ENCODE measurements at regions of chr1 and their contacts with region 1.

Region 1: DNA sequence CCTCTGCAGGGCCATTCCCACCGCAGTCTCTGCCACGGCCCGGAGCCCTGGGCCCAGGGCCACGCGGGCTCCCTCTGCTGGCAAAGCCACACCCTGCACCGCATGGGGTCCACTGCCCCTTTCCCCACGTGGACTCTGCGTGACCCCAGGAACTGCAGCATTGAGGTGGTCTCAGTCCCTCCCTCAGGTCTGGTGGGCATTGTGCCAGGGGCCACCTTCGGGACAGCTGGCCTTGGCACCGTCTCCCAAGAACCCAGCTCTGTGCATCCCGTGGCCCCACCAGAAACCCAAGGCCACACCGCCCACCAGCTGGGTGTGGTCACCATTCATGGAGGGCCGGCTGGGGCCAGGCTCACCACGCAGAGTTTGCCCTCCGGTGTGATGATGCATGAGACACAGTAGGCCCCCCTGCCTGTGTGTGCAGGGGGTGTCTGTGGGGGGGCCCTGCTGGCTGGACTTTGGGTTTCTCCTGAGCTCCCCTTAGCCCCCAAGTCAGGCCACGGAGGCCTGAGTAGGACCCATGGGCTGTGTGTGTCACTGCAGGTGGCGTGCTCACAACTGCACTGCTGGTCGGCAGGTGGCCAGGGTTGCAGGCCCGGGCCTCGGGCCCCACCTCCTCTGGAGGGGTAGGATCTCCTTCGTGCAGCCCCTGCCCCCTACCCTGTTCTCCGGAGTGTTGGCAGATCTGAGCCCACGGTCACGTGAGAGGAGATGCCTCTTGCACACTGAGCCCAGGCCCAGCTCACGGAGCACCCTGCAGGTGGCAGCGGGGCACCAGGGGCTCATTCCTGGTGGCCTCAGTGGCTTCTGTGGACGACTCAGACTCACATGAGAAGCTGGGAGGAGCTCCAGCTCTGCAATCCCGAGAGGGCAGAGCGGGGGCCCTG is 5.8 kb downstream of the VWA1 start:
- DNase-seq: peak in 2 of 3 donors; percentile 52 to 57
- H3K4me3 ChIP-seq: no peak overlapping the region
- H3K27ac ChIP-seq: no peak overlapping the region
- H3K4me1 ChIP-seq: peaks cover 0 to 36% (median 23%) of the 10 kb centered on the region in 4 experiments
- H3K27me3 ChIP-seq: peaks cover 0 to 3% (median 0%) of the 10 kb centered on the region in 5 experiments

Region 2: GRCh38 chr1:1361982-1362423 is 79.2 kb before region 1 on chr1:
- CTCF ChIA-PET with region 1: no interaction called
- POLR2A ChIA-PET with region 1: no interaction called
- DNase-seq: no peak
- H3K4me3 ChIP-seq: no peak overlapping the region
- H3K27ac ChIP-seq: no peak overlapping the region
- H3K4me1 ChIP-seq: peaks cover 0 to 5% (median 2%) of the 10 kb centered on the region in 4 experiments
- H3K27me3 ChIP-seq: peaks cover 0 to 66% (median 20%) of the 10 kb centered on the region in 5 experiments

Region 3: DNA sequence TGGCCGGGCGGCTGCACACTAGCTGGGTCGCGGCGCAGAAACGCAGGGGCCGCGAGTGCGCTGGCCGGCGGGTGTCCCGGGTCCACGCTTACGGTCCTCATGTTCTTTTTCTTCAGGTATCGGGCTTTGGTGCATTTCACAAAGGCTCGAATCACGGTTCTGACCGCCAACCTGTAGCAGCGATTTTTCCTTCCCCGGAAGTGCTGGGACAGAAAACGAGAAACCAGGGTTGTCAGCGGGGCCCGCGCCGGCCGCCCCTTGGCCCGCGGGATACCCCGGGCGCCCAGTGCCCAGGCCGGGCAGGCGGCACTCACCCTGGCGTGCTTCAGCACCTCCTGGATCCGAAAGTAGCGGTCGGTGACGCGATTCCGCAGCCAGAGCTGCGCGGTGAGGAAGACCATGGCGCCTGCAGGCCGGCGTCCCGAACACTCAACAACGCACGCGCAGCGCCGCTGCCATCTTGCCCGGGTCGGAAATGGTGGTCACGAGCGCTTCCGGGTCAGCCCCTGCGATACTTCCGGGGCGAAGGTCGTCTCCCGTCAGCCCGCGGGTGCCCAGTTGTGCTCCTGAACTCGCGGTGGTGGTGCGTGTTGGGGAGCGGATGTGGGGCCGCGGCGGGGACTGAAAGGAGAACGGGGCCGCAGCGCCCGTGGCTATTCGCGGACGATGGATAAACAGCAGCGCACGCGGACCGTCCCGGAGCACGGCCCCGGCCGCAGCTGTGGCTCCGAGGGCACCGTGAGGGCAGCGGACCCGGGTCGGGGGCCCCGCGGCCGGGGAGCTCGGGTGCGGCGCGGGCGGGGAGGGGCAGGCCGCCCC is 34.2 kb before region 1 on chr1 and contains the start of gene MRPL20:
- CTCF ChIA-PET with region 1: interaction called, 17 read pairs
- POLR2A ChIA-PET with region 1: interaction called, 6 read pairs
- DNase-seq: peak; percentile 93 to 95 (median 95)
- H3K4me3 ChIP-seq: peak within 1 kb of the TSS; percentile 69 to 97 (median 87)
- H3K27ac ChIP-seq: peak within 1 kb of the TSS; percentile 75 to 93
- H3K4me1 ChIP-seq: peaks cover 6 to 26% (median 19%) of the 10 kb centered on the region in 4 experiments
- H3K27me3 ChIP-seq: no peaks in the 10 kb centered on the region

Region 4: GRCh38 chr1:1451696-1452367 is 10.6 kb after region 1 on chr1:
- CTCF ChIA-PET with region 1: interaction called, 11 read pairs
- POLR2A ChIA-PET with region 1: no interaction called
- DNase-seq: no peak
- H3K4me3 ChIP-seq: no peak overlapping the region
- H3K27ac ChIP-seq: no peak overlapping the region
- H3K4me1 ChIP-seq: no peaks in the 10 kb centered on the region
- H3K27me3 ChIP-seq: peaks cover 0 to 2% (median 0%) of the 10 kb centered on the region in 5 experiments